Activated B cell treated with CpG ODN at 0.5 μM for 24 hours (primary cell): ENCODE measurements at regions of chr12 and their contacts with region 1.

Region 1: GRCh38 chr12:42346403-42347002 is 20.5 kb downstream of the PPHLN1 start:
- DNase-seq: no peak
- ATAC-seq: no peak
- H3K4me3 Mint-ChIP-seq: no peak overlapping the region
- H3K27ac Mint-ChIP-seq: no peak overlapping the region
- H3K4me1 Mint-ChIP-seq: peaks cover 28% of the 10 kb centered on the region
- H3K27me3 Mint-ChIP-seq: no peaks in the 10 kb centered on the region
- CTCF ChIP-seq: no peak

Region 2: DNA sequence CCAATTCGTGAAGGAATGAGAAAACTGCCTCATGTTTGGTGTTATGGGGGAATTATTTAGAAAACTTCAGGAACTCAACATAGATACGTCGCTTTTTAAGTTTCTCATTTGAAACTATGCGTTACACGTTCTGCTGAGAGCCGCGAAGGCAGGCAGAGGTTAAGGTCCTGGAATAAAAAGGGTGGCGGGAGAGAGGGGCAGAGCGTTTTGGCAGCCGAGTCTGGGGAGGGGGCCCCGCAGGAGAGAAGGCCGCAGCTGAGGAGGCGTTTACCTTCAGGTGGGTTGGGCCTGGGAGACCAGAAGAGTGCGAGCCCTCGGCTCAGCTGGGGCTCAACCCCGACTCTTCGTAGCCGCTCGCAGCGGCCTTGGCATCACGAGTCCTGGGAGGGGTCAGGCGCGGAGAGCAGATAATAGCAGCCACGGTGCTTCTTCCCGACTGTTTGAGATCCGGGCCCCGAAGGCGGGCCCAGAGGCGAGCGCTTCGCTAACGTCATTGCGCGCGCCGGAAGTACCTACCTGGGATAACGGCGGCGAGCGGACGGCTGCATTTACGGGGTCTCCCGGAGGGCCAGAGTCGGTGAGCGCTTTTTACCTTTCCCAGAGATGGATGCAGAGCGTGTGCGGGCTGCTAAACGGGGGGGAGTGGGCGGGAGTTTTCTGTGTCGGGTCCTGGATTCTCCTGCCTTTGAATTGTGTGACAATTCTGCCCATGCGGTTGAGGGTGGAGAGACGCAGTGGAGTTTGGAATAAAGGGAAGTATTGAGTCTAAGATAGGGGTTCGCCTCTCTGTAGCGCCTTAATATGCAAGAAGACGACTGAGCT is 20.6 kb before region 1 on chr12 and contains the starts of genes PPHLN1 and ZCRB1:
- CTCF ChIA-PET with region 1: no interaction called
- POLR2A ChIA-PET with region 1: no interaction called
- intact Hi-C with region 1: loop called (anchors 2 kb)
- DNase-seq: peak; percentile 73
- ATAC-seq: peak; percentile 89
- H3K4me3 Mint-ChIP-seq: peak within 1 kb of the TSS; percentile 94
- H3K27ac Mint-ChIP-seq: peak within 1 kb of the TSS; percentile 90
- H3K4me1 Mint-ChIP-seq: peaks cover 51% of the 10 kb centered on the region
- H3K27me3 Mint-ChIP-seq: no peaks in the 10 kb centered on the region
- CTCF ChIP-seq: no peak
- total RNA-seq, gene PPHLN1: 94.0 and 95.9 TPM in 2 replicates
- total RNA-seq, gene ZCRB1: 37.4 and 37.6 TPM in 2 replicates

Region 3: DNA sequence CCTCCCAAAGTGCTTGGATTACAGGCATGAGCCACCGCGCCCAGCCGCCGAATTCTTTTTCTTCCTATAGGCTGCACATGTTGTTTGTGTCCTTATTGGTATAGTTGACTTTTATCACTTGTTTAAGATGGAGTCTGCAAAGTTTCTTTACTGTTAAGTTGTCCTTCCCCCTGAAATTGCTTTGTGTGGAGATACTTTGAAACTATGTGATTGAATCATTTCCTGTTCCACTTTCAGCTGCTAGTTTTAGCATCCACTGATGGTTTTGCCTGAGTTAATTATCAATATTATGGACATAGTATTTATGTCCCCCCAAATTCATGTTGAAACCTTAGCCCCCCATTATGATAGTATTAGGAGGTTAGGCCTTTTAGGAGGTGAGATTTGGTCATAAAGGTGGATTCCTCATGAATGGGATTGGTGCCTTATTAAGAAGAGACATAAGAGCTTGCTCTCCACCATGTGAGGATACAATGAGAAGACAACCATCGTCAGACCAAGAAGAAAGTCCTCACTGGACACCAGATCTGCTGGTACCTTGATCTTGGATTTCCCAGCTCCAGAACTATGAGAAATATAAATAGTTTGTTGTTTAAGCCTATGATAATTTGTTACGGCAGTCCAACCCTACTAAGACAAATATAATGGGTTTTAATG is 14.4 kb after region 1 on chr12:
- CTCF ChIA-PET with region 1: no interaction called
- POLR2A ChIA-PET with region 1: no interaction called
- intact Hi-C with region 1: loop called (anchors 2 kb)
- DNase-seq: no peak
- ATAC-seq: no peak
- H3K4me3 Mint-ChIP-seq: no peak overlapping the region
- H3K27ac Mint-ChIP-seq: peak overlapping the region; percentile 47
- H3K4me1 Mint-ChIP-seq: peaks cover 33% of the 10 kb centered on the region
- H3K27me3 Mint-ChIP-seq: no peaks in the 10 kb centered on the region
- CTCF ChIP-seq: no peak

Region 4: GRCh38 chr12:42382013-42382680 is 35.6 kb after region 1 on chr12:
- CTCF ChIA-PET with region 1: no interaction called
- POLR2A ChIA-PET with region 1: no interaction called
- intact Hi-C with region 1: loop called (anchors 5 kb)
- DNase-seq: no peak
- ATAC-seq: no peak
- H3K4me3 Mint-ChIP-seq: no peak overlapping the region
- H3K27ac Mint-ChIP-seq: no peak overlapping the region
- H3K4me1 Mint-ChIP-seq: peaks cover 19% of the 10 kb centered on the region
- H3K27me3 Mint-ChIP-seq: no peaks in the 10 kb centered on the region
- CTCF ChIP-seq: no peak